CD8-positive, alpha-beta T cell (primary cell): ENCODE measurements at regions of chr2 and their contacts with region 1.

Region 1: GRCh38 chr2:199955339-199956261 is at the starts of genes MAIP1 and TYW5:
- DNase-seq: peak; percentile 60 to 88 (median 78)
- ATAC-seq: peak; percentile 87
- H3K4me3 ChIP-seq: peak within 1 kb of the TSS; percentile 97 to 98
- H3K4me3 Mint-ChIP-seq: peak within 1 kb of the TSS; percentile 97
- H3K27ac ChIP-seq: peak within 1 kb of the TSS; percentile 71 to 87
- H3K27ac Mint-ChIP-seq: peak within 1 kb of the TSS; percentile 91
- H3K4me1 ChIP-seq: peaks cover 34% of the 10 kb centered on the region
- H3K4me1 Mint-ChIP-seq: peaks cover 60% of the 10 kb centered on the region
- H3K27me3 ChIP-seq: no peaks in the 10 kb centered on the region
- H3K27me3 Mint-ChIP-seq: no peaks in the 10 kb centered on the region
- CTCF ChIP-seq: no peak
- total RNA-seq, gene MAIP1: 40.1 to 48.3 TPM
- total RNA-seq, gene TYW5: 20.5 to 22.2 TPM

Region 2: GRCh38 chr2:199850718-199851500 is 104.7 kb before region 1 on chr2 and contains the start of gene FTCDNL1:
- CTCF ChIA-PET with region 1: no interaction called
- POLR2A ChIA-PET with region 1: no interaction called
- intact Hi-C with region 1: loop called in 1 of 2 experiments (anchors 5 kb)
- DNase-seq: peak; percentile 27 to 77 (median 53)
- ATAC-seq: peak; percentile 95
- H3K4me3 ChIP-seq: peak within 1 kb of the TSS; percentile 59 to 82
- H3K4me3 Mint-ChIP-seq: peak within 1 kb of the TSS; percentile 99
- H3K27ac ChIP-seq: peak within 1 kb of the TSS in 1 of 2 experiments; percentile 35
- H3K27ac Mint-ChIP-seq: peak within 1 kb of the TSS; percentile 82
- H3K4me1 ChIP-seq: no peaks in the 10 kb centered on the region
- H3K4me1 Mint-ChIP-seq: peaks cover 10% of the 10 kb centered on the region
- H3K27me3 ChIP-seq: no peaks in the 10 kb centered on the region
- H3K27me3 Mint-ChIP-seq: peaks cover 4% of the 10 kb centered on the region
- CTCF ChIP-seq: peak; percentile 48
- total RNA-seq, gene FTCDNL1: 0.60 to 0.78 TPM

Region 3: DNA sequence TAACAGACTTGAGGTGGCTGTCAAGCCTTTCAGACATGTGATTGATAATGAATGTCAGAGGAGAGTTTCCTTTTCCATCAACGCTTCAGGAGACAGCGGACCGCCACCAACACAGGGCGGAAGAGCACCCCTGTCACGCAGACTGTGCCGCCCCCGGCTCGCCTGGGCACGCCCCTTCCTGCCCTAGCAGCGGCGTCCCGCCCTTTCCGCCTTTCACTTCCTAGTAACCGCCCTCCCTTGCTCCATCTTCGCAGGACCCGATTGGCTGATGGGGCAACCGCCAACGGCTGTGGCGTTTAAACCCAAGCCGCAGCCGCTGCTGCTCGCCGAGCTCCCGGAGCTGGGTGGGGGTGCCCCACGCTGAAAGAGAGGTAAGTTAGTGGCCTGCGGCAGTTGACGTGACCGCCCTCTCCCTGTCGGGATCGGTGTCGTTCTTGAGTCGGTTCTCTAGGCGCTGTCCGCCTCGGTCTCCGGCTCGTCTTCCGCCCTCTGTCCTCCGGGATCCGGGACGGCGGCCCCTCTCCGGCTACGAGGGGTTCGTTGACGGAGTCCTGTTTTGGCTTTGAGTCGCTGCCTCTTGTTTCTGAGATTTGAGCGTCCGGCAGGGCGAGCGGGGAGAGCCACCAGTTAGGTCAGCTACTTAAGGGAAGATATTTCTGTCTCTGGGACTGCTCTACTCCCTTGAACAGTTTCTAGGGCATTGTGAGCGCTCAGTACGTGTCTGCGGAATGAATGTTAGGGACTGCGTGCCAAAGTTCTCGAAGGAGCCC is 570.5 kb after region 1 on chr2 and contains the start of gene SGO2:
- CTCF ChIA-PET with region 1: no interaction called
- POLR2A ChIA-PET with region 1: no interaction called
- intact Hi-C with region 1: loop called (anchors 1 kb)
- DNase-seq: peak; percentile 92 to 97 (median 95)
- ATAC-seq: peak; percentile 100
- H3K4me3 ChIP-seq: peak within 1 kb of the TSS; percentile 73 to 84
- H3K4me3 Mint-ChIP-seq: peak within 1 kb of the TSS; percentile 91
- H3K27ac ChIP-seq: peak within 1 kb of the TSS; percentile 18 to 71
- H3K27ac Mint-ChIP-seq: peak within 1 kb of the TSS; percentile 87
- H3K4me1 ChIP-seq: peaks cover 7% of the 10 kb centered on the region
- H3K4me1 Mint-ChIP-seq: peaks cover 10% of the 10 kb centered on the region
- H3K27me3 ChIP-seq: no peaks in the 10 kb centered on the region
- H3K27me3 Mint-ChIP-seq: no peaks in the 10 kb centered on the region
- CTCF ChIP-seq: no peak
- total RNA-seq, gene SGO2: 0.52 to 0.69 TPM